Activated CD4-positive, alpha-beta T cell treated with anti-CD3 and anti-CD28 coated beads for 36 hours (primary cell): ENCODE measurements at regions of chr4 and their contacts with region 1.

Region 1: DNA sequence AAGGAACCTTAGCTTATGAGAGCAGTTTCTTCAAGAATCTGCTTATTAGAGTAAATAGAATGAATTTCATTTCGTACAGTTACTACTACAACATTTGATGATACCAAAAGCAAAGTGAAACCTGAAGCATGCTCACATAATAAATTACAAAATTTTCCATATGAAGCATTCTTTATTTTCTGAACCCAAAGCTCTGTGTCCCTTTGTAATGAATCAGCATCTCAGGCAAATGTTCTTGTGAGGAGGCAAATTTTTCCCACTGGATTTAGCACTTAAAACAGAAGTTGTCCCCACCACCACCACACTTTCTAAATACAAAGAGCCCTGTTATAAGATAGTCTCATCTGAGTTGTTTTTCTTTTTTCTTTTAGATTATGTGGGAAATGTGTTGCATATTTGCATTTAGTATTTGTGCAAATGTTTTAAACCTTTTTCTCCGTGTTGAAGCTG is 70.7 kb upstream of the NFKB1 start:
- DNase-seq: no peak
- ATAC-seq: no peak
- H3K4me3 Mint-ChIP-seq: peak overlapping the region; percentile 81
- H3K27ac Mint-ChIP-seq: peak overlapping the region; percentile 87
- H3K4me1 Mint-ChIP-seq: peaks cover 12% of the 10 kb centered on the region
- H3K27me3 Mint-ChIP-seq: peaks cover 5% of the 10 kb centered on the region

Region 2: DNA sequence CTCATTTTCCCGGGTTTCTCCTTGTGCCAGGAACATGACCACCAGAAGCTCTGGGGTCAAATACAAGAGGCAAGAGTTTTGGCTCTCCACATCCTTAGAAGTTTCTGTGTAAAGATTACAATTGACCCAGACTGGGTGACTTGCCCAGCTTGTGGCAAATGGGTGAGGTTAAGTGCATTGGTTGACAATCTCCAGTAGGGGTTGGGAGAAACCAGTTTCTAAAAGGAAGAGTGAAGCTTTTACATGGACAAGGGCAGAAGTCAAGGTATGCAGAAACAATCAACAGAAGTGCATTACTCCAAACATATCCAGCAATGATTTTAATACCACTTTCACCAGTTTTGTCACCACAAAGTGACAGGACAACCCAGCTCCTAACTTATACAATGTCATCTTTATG is 175.0 kb before region 1 on chr4:
- CTCF ChIA-PET with region 1: no interaction called
- POLR2A ChIA-PET with region 1: no interaction called
- intact Hi-C with region 1: loop called (anchors 1 to 5 kb)
- DNase-seq: no peak
- ATAC-seq: no peak
- H3K4me3 Mint-ChIP-seq: no peak overlapping the region
- H3K27ac Mint-ChIP-seq: no peak overlapping the region
- H3K4me1 Mint-ChIP-seq: no peaks in the 10 kb centered on the region
- H3K27me3 Mint-ChIP-seq: no peaks in the 10 kb centered on the region

Region 3: GRCh38 chr4:102390438-102390837 is 40.0 kb before region 1 on chr4:
- CTCF ChIA-PET with region 1: no interaction called
- POLR2A ChIA-PET with region 1: no interaction called
- intact Hi-C with region 1: loop called in 1 of 2 experiments (anchors 1 kb)
- DNase-seq: no peak
- ATAC-seq: peak; percentile 98
- H3K4me3 Mint-ChIP-seq: no peak overlapping the region
- H3K27ac Mint-ChIP-seq: no peak overlapping the region
- H3K4me1 Mint-ChIP-seq: peaks cover 18% of the 10 kb centered on the region
- H3K27me3 Mint-ChIP-seq: peaks cover 13% of the 10 kb centered on the region

Region 4: GRCh38 chr4:102404431-102405028 is 26.0 kb before region 1 on chr4:
- CTCF ChIA-PET with region 1: no interaction called
- POLR2A ChIA-PET with region 1: no interaction called
- intact Hi-C with region 1: no loop called
- DNase-seq: no peak
- ATAC-seq: no peak
- H3K4me3 Mint-ChIP-seq: no peak overlapping the region
- H3K27ac Mint-ChIP-seq: no peak overlapping the region
- H3K4me1 Mint-ChIP-seq: no peaks in the 10 kb centered on the region
- H3K27me3 Mint-ChIP-seq: no peaks in the 10 kb centered on the region

Region 5: GRCh38 chr4:102620697-102621497 is 190.4 kb after region 1 on chr4:
- CTCF ChIA-PET with region 1: interaction called, 8 read pairs
- POLR2A ChIA-PET with region 1: no interaction called
- intact Hi-C with region 1: loop called in 1 of 2 experiments (anchors 1 kb)
- DNase-seq: peak; percentile 30
- ATAC-seq: peak; percentile 25
- H3K4me3 Mint-ChIP-seq: no peak overlapping the region
- H3K27ac Mint-ChIP-seq: peak overlapping the region; percentile 47
- H3K4me1 Mint-ChIP-seq: peaks cover 50% of the 10 kb centered on the region
- H3K27me3 Mint-ChIP-seq: no peaks in the 10 kb centered on the region

Region 6: DNA sequence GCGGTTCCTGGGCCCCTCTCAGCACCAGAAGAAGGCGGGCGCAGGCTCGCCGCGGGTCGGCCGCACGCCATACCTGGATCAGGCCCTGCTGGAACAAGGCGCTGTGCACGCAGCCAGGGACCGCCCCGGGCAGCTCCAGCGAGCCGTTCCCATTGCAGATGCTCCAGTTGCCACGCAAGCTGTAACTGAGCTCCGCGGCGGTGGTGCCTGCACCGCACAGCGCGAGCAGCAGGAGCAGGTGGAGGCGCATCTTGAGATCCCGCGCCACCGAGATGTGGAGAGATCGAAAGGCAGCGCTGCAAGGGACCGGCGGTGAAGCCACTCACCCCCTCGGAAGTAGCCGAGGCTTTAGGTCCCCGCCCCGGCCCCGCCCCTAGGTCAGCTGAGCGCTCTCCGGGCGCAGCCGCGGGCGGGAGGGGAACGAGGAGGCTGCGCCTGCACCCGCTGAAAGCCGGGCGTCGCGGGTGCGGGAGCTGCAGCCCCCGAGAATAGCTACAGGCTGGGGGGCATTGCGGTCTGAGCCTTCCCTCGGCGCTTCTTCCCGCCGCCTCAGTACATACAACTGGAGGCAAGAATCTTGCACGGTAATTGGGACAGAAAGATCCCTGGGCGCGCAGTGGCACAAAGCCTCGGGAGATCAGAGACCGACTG is 330.3 kb after region 1 on chr4 and contains the start of gene MANBA:
- CTCF ChIA-PET with region 1: interaction called, 5 read pairs
- POLR2A ChIA-PET with region 1: no interaction called
- intact Hi-C with region 1: loop called (anchors 5 kb)
- DNase-seq: peak; percentile 93
- ATAC-seq: peak; percentile 93
- H3K4me3 Mint-ChIP-seq: peak within 1 kb of the TSS; percentile 90
- H3K27ac Mint-ChIP-seq: peak within 1 kb of the TSS; percentile 89
- H3K4me1 Mint-ChIP-seq: peaks cover 25% of the 10 kb centered on the region
- H3K27me3 Mint-ChIP-seq: peaks cover under 1% of the 10 kb centered on the region
- total RNA-seq, gene MANBA: 12.0 to 13.3 TPM

Region 7: DNA sequence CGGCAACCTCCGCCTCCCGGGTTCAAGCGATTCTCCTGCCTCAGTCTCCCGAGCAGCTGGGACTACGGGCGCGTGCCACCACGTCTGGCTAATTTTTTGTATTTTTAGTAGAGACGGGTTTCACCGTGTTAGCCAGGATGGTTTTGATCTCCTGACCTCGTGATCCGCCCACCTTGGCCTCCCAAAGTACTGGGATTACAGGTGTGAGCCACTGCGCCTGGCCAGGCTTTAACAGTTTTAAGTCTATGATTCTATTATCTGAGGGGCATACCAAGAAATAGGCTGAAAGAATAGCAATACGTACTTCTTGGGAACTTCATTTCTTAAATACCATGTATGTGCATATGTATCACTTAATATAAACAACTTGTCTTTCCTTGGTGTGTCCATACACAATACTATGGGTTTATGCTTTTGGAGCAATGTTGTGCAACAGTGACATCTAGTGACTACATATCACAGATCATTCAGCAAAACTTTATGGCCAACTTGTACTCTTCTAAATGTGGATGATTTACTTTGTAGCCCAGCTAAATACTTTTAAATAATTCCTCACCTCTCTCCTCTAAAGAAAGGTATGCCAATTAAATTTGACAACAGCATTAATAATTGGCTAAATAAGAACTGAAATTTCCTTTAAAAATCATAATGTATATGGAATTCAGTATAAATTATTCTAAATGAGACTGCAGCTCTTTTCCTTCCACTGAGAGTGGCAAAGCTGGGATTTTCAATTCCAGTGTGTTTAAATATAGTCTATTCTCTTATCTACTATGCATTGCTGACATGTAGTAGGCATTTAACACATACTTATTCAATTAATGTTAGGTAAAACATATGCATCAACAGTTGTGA is 578.6 kb after region 1 on chr4:
- CTCF ChIA-PET with region 1: interaction called, 9 read pairs
- POLR2A ChIA-PET with region 1: no interaction called
- intact Hi-C with region 1: loop called (anchors 1 to 2 kb)
- DNase-seq: no peak
- ATAC-seq: peak; percentile 95
- H3K4me3 Mint-ChIP-seq: no peak overlapping the region
- H3K27ac Mint-ChIP-seq: no peak overlapping the region
- H3K4me1 Mint-ChIP-seq: no peaks in the 10 kb centered on the region
- H3K27me3 Mint-ChIP-seq: peaks cover 2% of the 10 kb centered on the region